ENCODE measurements at regions of chr17 and their contacts with region 1.

Region 1: DNA sequence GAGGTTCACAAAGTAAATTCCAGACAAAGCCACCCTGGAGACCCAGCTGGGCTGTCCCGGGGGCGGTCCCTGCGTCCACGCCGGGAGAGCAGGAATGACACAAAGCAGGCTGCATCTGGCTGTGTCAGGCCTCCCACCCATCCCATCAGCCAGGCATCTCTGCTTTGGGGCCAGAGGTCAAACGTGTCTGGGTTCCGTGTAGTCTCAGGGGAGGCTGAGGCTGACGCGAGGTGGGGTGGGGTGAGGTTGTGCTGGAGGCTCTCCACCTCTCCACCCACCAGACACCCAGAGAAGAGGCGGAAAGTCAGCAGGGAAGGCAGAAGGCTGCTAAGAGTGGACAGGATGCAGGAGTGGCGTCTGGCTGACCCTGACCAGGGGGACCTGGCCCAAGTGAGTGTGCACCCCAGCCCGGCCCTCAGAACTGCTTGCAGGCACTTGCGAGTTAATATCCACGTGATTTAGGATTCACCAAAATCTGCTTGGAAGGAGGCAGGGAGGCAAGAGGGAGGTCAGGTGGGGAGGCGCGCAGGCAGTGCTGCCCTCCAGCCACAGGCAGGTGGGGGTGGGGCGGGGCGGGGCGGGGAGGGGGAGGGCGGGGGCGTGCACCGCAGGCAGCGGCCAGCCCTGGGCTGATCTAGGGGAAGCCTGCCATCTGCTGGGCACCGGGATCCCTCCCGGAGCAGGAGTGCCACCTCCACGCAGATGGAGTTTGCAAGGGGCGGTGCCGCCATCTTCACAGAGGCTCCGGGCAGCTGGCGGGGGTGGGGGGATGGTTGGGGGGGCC is 44.3 kb downstream of the TBC1D16 start:
- DNase-seq: peak; percentile 85
- ATAC-seq: peak; percentile 58
- H3K4me3 ChIP-seq: peak overlapping the region; percentile 51 to 77 (median 62); a peak in 4 of 6 replicates
- H3K27ac ChIP-seq: peak overlapping the region; percentile 98
- H3K4me1 ChIP-seq: peaks cover 90% of the 10 kb centered on the region
- H3K27me3 ChIP-seq: no peaks in the 10 kb centered on the region
- CTCF ChIP-seq: peak; percentile 81
- EP300 ChIP-seq: no peak
- POLR2A ChIP-seq: no peak
- RAD21 ChIP-seq: no peak; the same call in 1 of the 2 replicates

Region 2: GRCh38 chr17:79461041-79461440 is 530.3 kb before region 1 on chr17:
- CTCF ChIA-PET with region 1: no interaction called
- POLR2A ChIA-PET with region 1: no interaction called
- in situ Hi-C with region 1: no loop called
- intact Hi-C with region 1: no loop called
- DNase-seq: no peak
- ATAC-seq: no peak
- H3K4me3 ChIP-seq: no peak overlapping the region
- H3K27ac ChIP-seq: no peak overlapping the region
- H3K4me1 ChIP-seq: no peaks in the 10 kb centered on the region
- H3K27me3 ChIP-seq: peaks cover 12 to 63% of the 10 kb centered on the region in 2 experiments
- CTCF ChIP-seq: no peak
- EP300 ChIP-seq: no peak
- POLR2A ChIP-seq: no peak
- RAD21 ChIP-seq: no peak

Region 3: DNA sequence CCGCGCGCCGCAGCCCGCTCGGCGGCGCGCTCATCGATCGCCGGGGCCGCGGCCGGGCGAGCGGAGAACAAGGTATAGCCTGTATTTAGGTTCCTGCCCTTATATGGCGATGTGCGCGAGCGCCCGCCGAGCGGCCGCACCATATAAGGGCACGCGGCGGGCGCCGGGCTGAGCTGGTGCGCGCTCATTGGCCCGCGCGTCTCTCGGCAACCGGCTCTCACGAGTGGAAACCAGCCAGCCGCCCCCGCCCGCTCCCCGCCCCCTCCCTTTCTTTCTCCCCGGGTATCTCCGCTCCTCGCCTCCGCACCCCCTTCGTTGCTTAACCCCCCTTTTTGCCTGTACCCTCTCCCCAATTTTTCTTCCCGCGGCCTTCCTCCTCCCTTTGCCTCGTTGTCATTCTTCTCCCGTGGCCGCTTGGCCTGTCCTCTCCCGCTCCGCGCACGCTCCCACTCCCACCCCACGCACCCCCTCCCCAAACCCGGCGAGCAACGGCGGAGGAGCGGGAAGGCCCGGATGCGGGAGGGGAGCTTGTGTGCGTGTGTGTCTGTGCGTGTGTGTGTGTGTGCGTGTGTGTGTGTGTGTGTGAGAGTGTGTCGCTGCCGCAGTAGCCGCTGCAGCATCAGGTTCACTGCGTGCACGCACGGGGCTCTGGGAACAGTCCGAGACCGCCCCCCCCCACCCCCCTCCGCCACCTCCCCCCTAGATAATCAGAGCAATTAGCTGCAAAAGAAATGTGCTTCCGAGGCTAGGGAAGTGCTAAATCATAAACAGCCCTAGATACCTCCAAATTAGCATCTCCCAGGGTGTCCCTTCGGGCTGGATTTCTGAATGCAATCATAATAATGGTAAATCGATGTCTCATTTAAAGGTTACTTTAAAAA is 181.0 kb before region 1 on chr17:
- CTCF ChIA-PET with region 1: no interaction called
- POLR2A ChIA-PET with region 1: interaction called, 17 read pairs
- in situ Hi-C with region 1: loop called (anchors 5 kb)
- intact Hi-C with region 1: loop called (anchors 2 kb)
- DNase-seq: peak; percentile 83
- ATAC-seq: peak; percentile 77
- H3K4me3 ChIP-seq: peak overlapping the region in 2 of 3 experiments; percentile 38 to 62; a peak in 3 of 6 replicates
- H3K27ac ChIP-seq: no peak overlapping the region
- H3K4me1 ChIP-seq: peaks cover 49% of the 10 kb centered on the region
- H3K27me3 ChIP-seq: peaks cover 25 to 68% of the 10 kb centered on the region in 2 experiments
- CTCF ChIP-seq: no peak
- EP300 ChIP-seq: no peak
- POLR2A ChIP-seq: no peak
- RAD21 ChIP-seq: peak; percentile 27; the same call in 1 of the 2 replicates

Region 4: DNA sequence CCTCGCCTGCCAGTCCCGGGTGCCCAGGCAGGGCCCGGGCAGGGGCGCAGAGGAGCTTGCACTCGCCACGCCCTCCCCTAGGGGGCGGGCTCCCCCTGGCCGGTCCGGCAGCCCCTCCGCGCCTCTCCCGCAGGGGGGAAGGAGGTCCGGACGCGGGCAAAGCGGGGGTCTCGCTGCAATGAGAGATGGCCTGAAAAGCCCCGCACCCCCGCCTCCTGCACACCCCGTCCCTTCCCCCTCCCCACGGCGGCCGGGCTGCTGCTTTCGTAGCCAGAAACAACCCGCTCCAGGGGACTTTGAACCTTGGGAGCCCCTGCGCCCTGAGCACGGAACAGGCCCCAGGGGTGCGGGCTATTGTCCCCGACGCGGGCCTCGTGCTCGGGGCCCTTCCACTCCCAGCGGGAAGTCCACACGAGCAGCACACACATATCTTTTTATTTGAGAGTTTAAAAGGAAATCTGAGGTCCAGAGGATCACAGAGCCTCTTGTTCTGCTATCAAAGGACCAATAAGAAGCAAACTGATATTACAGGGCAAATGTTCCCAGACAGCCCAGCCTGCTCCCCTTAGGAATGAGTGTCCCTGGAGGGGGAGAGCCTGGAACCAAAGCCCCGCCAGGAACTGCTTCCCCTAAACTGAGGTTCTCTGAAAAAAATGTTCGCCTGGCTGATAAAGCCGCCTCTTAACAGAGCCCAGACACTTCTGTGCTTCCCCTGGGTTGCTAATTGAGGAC is 146.3 kb before region 1 on chr17:
- CTCF ChIA-PET with region 1: interaction called, 6 read pairs
- POLR2A ChIA-PET with region 1: interaction called, 333 read pairs
- in situ Hi-C with region 1: no loop called
- intact Hi-C with region 1: loop called (anchors 2 kb)
- DNase-seq: peak; percentile 74
- ATAC-seq: peak; percentile 73
- H3K4me3 ChIP-seq: peak overlapping the region; percentile 63 to 87 (median 77)
- H3K27ac ChIP-seq: peak overlapping the region; percentile 85
- H3K4me1 ChIP-seq: peaks cover 86% of the 10 kb centered on the region
- H3K27me3 ChIP-seq: no peaks in the 10 kb centered on the region
- CTCF ChIP-seq: peak; percentile 84
- EP300 ChIP-seq: peak; percentile 24 to 69; a peak in 3 of 4 replicates
- POLR2A ChIP-seq: no peak
- RAD21 ChIP-seq: peak; percentile 51

Region 5: DNA sequence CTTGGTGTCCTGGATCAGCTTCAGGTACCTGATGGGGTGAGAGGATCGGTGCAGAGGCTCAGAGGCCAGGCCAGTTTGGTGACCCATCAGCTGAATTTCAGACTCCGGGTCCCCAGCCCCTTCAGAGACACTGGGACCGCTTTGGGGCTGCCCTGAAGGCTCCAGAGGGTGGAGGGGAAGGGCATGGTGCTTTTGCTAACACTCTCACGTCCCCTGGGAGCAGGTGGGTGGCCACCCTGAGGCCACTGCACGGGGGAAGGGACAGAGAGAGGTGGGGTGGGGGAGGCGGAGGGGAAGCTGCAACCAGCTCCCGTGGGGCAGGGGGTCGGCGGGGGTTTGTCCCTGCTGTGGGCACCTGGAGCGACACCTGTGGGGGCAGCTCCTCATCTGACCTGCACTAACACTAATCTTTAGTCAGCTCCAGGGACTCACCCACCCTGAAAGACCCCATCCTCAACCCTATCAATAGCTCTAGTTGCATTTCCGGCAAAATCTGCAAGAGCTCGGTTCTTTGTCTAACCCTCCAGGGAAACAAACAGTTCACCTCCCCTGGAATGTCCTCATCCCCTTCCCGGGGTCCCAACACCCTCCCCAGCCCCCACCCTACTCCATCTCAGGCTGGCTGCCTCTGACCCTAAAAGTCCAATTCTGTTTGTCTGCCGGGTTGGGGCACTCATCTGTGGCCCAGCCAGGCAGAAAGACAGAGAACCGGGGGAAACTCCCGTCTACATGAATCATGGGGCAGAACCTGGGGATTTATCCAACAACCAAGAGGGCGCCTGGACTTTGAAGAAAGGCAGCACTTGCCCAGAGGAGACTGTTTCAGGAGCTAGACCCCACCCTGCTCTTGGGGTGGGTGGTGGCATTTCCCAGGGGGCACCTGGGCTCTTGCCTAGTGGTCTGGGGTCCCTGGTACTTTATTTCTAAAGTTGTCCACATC is 60.2 kb before region 1 on chr17:
- CTCF ChIA-PET with region 1: no interaction called
- POLR2A ChIA-PET with region 1: interaction called, 76 read pairs
- in situ Hi-C with region 1: loop called (anchors 5 kb)
- intact Hi-C with region 1: loop called (anchors 1 kb)
- DNase-seq: no peak
- ATAC-seq: peak; percentile 0; the same call in 2 of the 3 replicates
- H3K4me3 ChIP-seq: peak overlapping the region; percentile 4 to 48 (median 45); a peak in 5 of 6 replicates
- H3K27ac ChIP-seq: peak overlapping the region; percentile 24
- H3K4me1 ChIP-seq: peaks cover 93% of the 10 kb centered on the region
- H3K27me3 ChIP-seq: no peaks in the 10 kb centered on the region
- CTCF ChIP-seq: no peak
- EP300 ChIP-seq: no peak
- POLR2A ChIP-seq: no peak
- RAD21 ChIP-seq: no peak

Region 6: GRCh38 chr17:80023481-80024205 is 32.3 kb after region 1 on chr17:
- CTCF ChIA-PET with region 1: no interaction called
- POLR2A ChIA-PET with region 1: interaction called, 27 read pairs
- in situ Hi-C with region 1: no loop called
- intact Hi-C with region 1: no loop called
- DNase-seq: peak; percentile 95
- ATAC-seq: peak; percentile 89
- H3K4me3 ChIP-seq: peak overlapping the region; percentile 48 to 74 (median 64); a peak in 5 of 6 replicates
- H3K27ac ChIP-seq: peak overlapping the region; percentile 70
- H3K4me1 ChIP-seq: peaks cover 72% of the 10 kb centered on the region
- H3K27me3 ChIP-seq: no peaks in the 10 kb centered on the region
- CTCF ChIP-seq: peak; percentile 61
- EP300 ChIP-seq: peak in 1 of 2 experiments; percentile 74; a peak in 2 of 4 replicates
- POLR2A ChIP-seq: peak; percentile 33 to 43; a peak in 2 of 4 replicates
- RAD21 ChIP-seq: peak; percentile 63

Measured in HepG2 (cell line).